Motor neuron (in vitro differentiated cells): ENCODE measurements at regions of chr11 and their contacts with region 1.

Region 1: GRCh38 chr11:12900496-12900895 is 108.6 kb upstream of the RASSF10 start:
- ATAC-seq: peak in 1 of 8 experiments; percentile 26
- H3K4me3 ChIP-seq: no peak overlapping the region
- H3K27ac ChIP-seq: no peak overlapping the region
- H3K4me1 ChIP-seq: no peaks in the 10 kb centered on the region

Region 2: GRCh38 chr11:12319988-12320387 is 580.5 kb before region 1 on chr11:
- in situ Hi-C with region 1: loop called in 7 of 9 experiments (anchors 10 to 25 kb)
- ATAC-seq: peak in 1 of 8 experiments; percentile 32
- H3K4me3 ChIP-seq: no peak overlapping the region
- H3K27ac ChIP-seq: no peak overlapping the region
- H3K4me1 ChIP-seq: no peaks in the 10 kb centered on the region